ENCODE measurements at regions of chr11 and their contacts with region 1.

Region 1: GRCh38 chr11:121112498-121113455 is 11.7 kb downstream of the TECTA start:
- DNase-seq: peak in 3 of 4 donors; percentile 51 to 66 (median 53)
- ATAC-seq: peak; percentile 98
- H3K4me3 ChIP-seq: no peak overlapping the region
- H3K27ac ChIP-seq: no peak overlapping the region
- H3K4me1 ChIP-seq: peaks cover 0 to 5% of the 10 kb centered on the region in 2 donors
- H3K27me3 ChIP-seq: peaks cover 0 to 4% of the 10 kb centered on the region in 2 donors
- CTCF ChIP-seq: peak; percentile 43 to 62

Region 2: GRCh38 chr11:120929664-120930154 is 183.1 kb before region 1 on chr11:
- intact Hi-C with region 1: loop called in 1 of 2 experiments (anchors 10 kb)
- DNase-seq: peak in 1 of 4 donors; percentile 39
- ATAC-seq: peak; percentile 82
- H3K4me3 ChIP-seq: no peak overlapping the region
- H3K27ac ChIP-seq: no peak overlapping the region
- H3K4me1 ChIP-seq: no peaks in the 10 kb centered on the region
- H3K27me3 ChIP-seq: peaks cover 0 to 11% of the 10 kb centered on the region in 2 donors
- CTCF ChIP-seq: peak; percentile 27

Region 3: DNA sequence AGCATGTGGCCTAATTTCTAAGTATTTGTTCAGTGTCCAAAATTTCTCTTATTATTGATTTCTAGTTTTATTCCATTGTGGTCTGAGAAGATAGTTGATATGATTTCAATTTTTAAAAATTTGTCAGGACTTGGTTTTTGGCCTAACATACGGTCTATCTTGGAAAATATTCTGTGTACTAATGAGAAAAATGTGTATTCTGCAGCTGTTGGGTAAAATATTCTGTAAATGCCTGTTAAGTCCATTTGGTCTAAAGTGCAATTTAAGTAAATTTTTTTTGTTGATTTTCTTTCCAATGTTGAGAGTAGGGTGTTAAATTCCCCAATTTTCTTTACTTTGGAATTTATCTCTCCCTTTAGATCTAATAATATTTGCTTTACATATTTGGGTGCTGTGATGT is 66.5 kb after region 1 on chr11:
- intact Hi-C with region 1: no loop called
- DNase-seq: no peak
- ATAC-seq: no peak
- H3K4me3 ChIP-seq: no peak overlapping the region
- H3K27ac ChIP-seq: no peak overlapping the region
- H3K4me1 ChIP-seq: no peaks in the 10 kb centered on the region
- H3K27me3 ChIP-seq: no peaks in the 10 kb centered on the region
- CTCF ChIP-seq: no peak

Measured in left lung (tissue), 14 donors.